Stomach (tissue), 19 donors: ENCODE measurements at regions of chr10 and their contacts with region 1.

Region 1: GRCh38 chr10:101602761-101603398 is 14.8 kb downstream of the DPCD start:
- DNase-seq: peak; percentile 74 to 85
- H3K4me3 ChIP-seq: no peak overlapping the region
- H3K27ac ChIP-seq: no peak overlapping the region
- H3K4me1 ChIP-seq: no peaks in the 10 kb centered on the region
- H3K27me3 ChIP-seq: no peaks in the 10 kb centered on the region
- CTCF ChIP-seq: peak in 5 of 7 experiments; percentile 42 to 80 (median 55)
- EP300 ChIP-seq: no peak
- POLR2A ChIP-seq: no peak

Region 2: DNA sequence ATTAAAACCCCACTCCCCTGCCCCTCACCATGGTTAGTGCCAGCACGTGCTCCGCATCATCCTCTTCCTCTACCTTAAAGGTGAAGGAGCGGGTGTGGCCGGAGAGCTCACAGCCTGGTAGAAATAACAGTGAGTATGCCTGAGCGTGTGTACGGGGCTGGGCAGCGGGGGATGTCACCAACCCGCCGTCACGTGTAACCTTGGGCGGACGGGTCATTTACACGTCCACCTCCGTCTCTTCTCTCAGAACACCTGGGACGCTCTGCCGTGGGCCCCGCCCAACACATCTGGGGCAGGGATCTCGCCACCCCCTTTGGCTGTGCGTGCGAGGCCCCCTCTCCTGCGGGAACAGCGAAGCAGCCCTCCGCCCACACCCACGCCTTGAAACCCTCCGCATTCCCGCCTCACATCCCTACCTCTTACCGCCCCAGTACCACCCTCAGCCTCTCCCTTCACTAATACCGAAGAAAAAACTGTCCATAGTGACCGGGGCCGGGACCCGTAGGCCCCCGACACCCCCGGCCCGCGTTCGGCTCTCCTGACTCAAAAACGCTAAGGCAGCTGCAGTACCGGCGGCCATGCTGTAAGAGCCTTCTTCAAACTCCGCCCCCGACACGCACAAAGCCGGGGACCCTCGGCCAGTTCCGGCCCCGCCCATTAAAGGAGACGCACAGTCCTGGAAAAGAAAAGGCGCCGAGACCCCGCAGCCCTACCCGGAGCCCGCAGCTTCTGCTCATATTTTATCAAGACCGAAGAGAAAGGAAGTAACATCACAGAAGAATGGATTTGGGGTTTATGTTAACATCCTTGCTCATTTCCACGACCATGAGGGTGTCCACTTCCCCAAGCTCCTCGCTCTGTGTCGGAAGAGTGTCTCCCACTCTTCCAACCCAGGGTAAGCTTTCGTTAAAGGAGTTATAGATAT is 180.2 kb after region 1 on chr10 and contains the start of gene NPM3:
- intact Hi-C with region 1: loop called (anchors 5 kb)
- DNase-seq: peak; percentile 81 to 95
- H3K4me3 ChIP-seq: peak within 1 kb of the TSS; percentile 56 to 71 (median 64)
- H3K27ac ChIP-seq: peak within 1 kb of the TSS; percentile 7 to 72 (median 57)
- H3K4me1 ChIP-seq: peaks cover 40 to 71% (median 63%) of the 10 kb centered on the region in 4 donors
- H3K27me3 ChIP-seq: peaks cover 0 to 17% (median 16%) of the 10 kb centered on the region in 3 donors
- CTCF ChIP-seq: peak in 1 of 7 experiments; percentile 18
- EP300 ChIP-seq: no peak
- POLR2A ChIP-seq: no peak
- total RNA-seq, gene NPM3: 2.3 to 68.1 (median 32.6) TPM in 4 of 5 donors, not detected in the other